ENCODE measurements at regions of chr7 and their contacts with region 1.

Region 1: GRCh38 chr7:150988230-150989226 is 2.3 kb upstream of the NOS3 start:
- DNase-seq: peak; percentile 75
- ATAC-seq: peak; percentile 58

Region 2: DNA sequence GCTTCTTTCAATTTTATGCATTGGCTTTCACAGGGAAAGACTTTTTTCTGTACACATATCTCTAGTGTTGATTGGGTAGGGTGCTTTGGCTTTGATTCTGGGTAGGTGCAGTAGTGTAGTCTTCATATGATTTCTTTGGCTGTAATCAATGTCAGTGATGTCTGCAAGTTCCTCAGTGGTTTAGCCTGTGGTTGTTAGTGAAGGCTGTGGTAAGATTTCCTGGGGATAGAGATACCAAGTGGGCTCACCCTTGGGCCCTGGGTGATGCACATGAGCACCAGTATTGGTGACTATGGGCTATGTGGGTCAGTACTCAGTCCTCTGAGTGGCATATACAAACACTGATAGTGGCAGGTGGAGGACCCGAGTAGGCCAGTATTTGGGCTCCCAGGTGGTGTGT is 525.1 kb before region 1 on chr7:
- intact Hi-C with region 1: no loop called
- DNase-seq: no peak
- ATAC-seq: no peak

Region 3: DNA sequence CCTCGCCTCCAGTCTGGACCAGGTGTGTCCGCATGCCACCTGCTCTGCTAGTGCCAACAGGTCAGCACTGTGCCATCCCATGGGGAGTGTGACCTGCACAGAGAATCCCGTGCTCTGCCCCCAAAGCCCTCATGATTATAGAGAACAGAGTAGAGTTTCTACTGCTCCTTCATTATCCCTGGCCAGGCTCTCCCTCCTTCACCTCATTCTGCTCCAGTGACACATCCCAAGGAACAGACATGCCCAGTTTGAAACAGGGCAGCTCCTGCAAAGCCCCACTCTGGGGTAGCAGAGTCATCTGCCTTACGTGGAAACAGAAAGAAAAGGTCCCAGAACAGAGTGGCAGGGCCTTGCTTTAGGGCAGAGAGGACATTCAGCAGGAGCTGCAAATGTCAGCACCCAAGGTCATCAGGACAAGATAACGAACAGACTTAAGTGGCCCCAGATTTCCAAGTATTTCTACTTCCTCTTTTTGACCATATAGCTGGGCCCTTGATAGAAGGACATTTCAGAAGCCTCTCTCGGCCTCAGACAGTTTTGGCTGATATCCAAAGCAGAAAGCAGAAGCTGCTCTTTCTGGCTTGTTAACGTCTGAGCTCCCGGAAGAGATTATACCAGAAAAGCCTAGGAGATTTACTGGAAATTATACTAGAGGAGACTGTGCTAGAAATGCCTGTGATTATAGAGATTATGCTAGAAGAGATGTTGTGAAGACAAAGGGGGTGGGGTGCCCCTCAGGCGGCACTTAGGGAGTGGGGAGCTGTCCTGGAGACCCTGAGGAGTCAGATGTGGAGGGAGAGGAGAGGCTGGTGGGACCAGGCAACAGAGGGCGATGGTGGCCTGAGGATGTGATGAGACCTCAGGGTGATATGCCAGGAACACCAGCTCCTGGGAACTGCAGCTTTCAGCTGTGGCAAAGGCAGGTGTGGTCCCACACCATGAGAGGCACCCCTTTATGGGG is 200.9 kb before region 1 on chr7:
- intact Hi-C with region 1: loop called (anchors 10 kb)
- DNase-seq: peak; percentile 52
- ATAC-seq: peak; percentile 57

Region 4: DNA sequence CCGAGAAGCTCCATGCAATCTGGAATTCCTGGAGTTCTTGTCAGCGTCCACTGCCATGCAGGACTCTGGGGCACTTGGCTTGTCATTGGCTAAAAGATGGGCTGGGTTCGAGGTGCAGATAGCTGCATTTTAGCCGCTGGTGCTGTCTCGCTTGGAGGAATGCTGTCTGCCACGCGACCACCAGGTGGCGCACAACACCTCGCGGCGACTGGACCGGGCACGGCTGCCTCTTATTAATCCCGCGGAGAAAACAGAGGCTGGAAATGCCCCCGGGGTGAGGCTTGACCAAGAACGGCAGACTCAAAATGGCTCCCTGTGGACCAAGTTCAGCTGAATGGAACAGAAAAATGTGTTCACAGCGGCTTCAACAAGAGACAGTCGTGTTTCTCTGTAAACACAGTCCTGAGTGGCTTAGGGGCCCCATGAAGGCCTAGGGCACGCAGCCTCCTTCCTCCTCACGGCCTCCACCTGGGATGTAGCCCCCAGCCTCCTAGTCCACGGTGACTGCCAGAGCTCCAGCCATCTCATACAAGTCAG is 90.0 kb before region 1 on chr7:
- intact Hi-C with region 1: loop called (anchors 5 kb)
- DNase-seq: peak; percentile 89
- ATAC-seq: peak; percentile 61